ENCODE measurements at regions of chr16 and their contacts with region 1.

Region 1: DNA sequence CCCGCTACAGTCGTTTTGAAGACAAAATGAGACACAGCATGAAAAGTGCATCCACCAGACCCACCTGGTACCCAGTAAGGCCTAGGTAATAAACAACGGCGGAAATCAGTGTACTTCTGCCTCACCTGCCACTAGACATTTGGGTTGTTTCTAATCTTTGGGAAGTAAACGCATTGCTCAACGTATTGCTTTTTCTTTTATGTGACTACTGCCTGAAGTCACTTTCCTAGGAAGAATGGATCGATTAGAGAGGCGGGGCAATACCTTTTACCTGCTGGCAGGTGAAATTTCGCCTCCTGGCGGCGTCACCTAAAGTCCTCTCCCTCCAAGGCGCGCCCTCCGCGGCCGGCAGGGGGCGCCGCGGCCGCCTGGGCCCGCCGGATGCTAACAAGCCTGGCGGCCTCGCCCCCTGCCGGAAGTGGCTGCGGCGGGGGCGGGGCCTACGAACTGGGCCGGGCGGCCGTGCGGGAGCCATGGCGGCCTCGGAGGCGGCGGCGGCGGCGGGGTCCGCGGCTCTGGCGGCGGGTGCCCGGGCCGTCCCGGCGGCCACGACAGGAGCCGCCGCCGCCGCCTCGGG is at the start of gene ATMIN:
- DNase-seq: peak; percentile 80 to 93
- H3K4me3 ChIP-seq: peak within 1 kb of the TSS; percentile 66 to 90 (median 85)
- H3K27ac ChIP-seq: peak within 1 kb of the TSS; percentile 80; the same call in 1 of the 2 replicates
- H3K4me1 ChIP-seq: peaks cover 2 to 6% (median 3%) of the 10 kb centered on the region in 4 experiments; a peak in 5 of 7 replicates
- H3K27me3 ChIP-seq: no peaks in the 10 kb centered on the region
- CTCF ChIP-seq: peak; percentile 95 to 100 (median 96)
- EP300 ChIP-seq: peak in 1 of 2 experiments; percentile 73; a peak in 1 of 3 replicates
- POLR2A ChIP-seq: peak; percentile 46 to 70; a peak in 1 of 3 replicates
- RAD21 ChIP-seq: peak; percentile 59 to 74
- total RNA-seq, gene ATMIN: 55.9 and 59.8 TPM in 2 replicates

Region 2: DNA sequence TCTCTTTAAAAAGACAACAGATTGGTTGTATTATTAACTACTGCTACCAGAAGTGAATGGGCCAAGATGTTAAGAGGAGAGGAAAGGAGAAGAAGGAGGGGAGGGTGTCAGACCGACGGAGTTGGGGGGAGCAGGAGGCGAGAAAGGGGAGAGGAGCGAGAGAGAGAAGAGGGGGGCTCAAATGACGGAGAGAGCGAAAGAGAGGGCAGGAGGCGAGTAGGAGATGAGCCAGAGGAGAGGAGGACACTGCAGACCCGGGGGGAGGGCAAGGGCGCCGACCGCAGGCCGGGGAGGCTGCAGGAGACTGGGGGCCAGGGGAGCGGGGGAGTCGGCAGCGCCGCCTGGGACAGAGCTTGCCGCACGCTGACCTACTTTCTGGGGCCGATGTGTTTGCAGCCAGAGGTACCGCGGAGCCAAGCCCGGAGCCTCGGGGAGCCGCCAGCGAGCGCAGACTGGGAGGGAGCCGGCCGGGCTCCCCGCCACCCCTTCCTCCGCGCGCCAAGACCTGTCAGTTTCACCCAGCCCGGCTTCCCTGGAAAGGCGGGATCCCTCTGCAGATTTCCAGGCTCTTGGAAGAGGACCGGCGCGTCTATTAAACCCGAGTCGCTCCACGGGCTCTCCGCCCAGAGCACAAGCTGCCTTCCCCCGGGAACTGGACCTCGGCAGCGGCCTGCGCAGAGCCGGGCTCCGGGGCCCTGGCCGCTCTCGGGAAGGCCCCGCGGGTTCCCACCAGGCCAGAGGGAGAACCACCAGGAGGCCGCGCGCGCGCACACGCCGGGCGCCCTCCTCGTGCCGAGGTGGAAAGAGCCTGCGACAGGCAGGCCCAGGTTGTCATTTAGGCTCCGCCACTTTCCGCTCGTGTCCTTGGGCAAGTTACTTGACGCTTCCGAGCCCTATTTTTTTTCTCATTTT is 103.4 kb before region 1 on chr16:
- CTCF ChIA-PET with region 1: no interaction called
- POLR2A ChIA-PET with region 1: no interaction called
- DNase-seq: peak; percentile 33 to 77
- H3K4me3 ChIP-seq: peak overlapping the region; percentile 27 to 61 (median 34)
- H3K27ac ChIP-seq: no peak overlapping the region
- H3K4me1 ChIP-seq: peaks cover 0 to 4% (median 0%) of the 10 kb centered on the region in 4 experiments; a peak in 2 of 7 replicates
- H3K27me3 ChIP-seq: peaks cover 0 to 26% (median 21%) of the 10 kb centered on the region in 4 experiments; a peak in 6 of 7 replicates
- CTCF ChIP-seq: peak in 2 of 3 experiments; percentile 0 to 15; a peak in 2 of 4 replicates
- EP300 ChIP-seq: no peak
- POLR2A ChIP-seq: no peak
- RAD21 ChIP-seq: no peak; a peak in 1 of 4 replicates

Region 3: DNA sequence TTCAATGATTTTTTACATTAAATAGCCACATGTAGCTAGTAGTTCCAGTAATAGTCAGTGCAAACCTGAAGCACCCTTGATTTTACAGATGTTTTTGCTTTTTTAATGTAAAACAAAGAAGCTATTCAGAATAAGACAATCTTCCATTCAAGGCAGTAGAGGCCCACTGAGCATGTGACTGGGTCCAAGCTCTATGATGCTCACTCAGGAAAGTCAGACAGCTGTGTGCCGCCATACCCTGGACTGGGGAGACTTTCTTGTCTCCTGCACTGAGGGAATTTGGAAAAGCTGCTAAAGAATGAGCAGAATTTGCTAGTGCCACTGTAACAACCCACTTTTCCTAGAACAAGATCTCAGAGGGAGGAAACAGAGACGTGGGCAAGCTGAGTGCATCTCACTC is 17.0 kb before region 1 on chr16:
- CTCF ChIA-PET with region 1: interaction called, 11 read pairs
- POLR2A ChIA-PET with region 1: interaction called, 6 read pairs
- DNase-seq: no peak
- H3K4me3 ChIP-seq: no peak overlapping the region
- H3K27ac ChIP-seq: no peak overlapping the region
- H3K4me1 ChIP-seq: no peaks in the 10 kb centered on the region
- H3K27me3 ChIP-seq: no peaks in the 10 kb centered on the region
- CTCF ChIP-seq: no peak
- EP300 ChIP-seq: no peak
- POLR2A ChIP-seq: no peak
- RAD21 ChIP-seq: no peak

Region 4: DNA sequence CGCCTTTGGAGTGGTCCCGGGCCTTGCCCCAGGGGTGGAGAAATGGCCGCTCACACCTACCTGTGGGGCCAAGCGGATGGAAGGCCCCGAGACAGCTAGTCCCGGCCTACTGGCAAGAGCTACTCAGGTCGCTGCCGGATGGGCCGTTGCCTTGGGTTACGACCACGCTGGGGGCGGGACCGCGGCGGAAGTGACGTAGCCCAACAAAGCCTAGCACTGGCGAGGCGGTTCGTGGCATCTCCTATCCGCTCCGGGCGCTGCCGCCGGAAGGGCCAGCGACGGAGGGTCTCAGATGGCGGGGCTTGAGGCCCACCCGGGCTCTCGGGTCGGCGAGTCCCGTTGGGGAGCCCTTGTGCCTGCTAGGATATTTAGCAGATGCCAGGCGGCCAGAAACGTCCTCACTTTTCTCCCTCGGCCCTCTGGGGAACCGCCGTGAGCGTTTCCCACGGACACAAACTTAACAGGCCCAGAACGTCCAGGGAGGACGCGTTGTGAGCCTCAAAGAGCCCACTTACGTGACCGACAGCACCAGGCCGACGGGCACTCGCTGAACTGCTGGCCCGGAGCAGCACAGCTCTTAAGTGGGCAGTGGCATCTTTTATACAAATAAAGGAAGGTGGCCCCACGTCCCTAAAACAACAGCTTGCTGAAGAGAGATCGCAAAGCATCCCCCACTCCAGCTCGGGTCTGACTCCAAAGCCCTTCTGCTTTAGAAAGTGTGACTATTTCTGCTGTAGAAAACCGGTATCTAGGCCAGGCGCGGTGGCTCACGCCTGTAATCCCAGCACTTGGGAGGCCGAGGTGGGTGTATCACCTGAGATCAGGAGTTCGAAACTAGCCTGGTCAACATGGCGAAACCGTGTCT is 41.8 kb after region 1 on chr16 and contains the start of gene C16orf46:
- CTCF ChIA-PET with region 1: interaction called, 6 read pairs
- POLR2A ChIA-PET with region 1: interaction called, 35 read pairs
- DNase-seq: peak; percentile 90 to 100
- H3K4me3 ChIP-seq: peak within 1 kb of the TSS; percentile 64 to 90 (median 80)
- H3K27ac ChIP-seq: peak within 1 kb of the TSS; percentile 84
- H3K4me1 ChIP-seq: peaks cover 0 to 2% (median 0%) of the 10 kb centered on the region in 4 experiments; a peak in 3 of 7 replicates
- H3K27me3 ChIP-seq: no peaks in the 10 kb centered on the region
- CTCF ChIP-seq: no peak
- EP300 ChIP-seq: no peak
- POLR2A ChIP-seq: peak; percentile 93 to 94
- RAD21 ChIP-seq: no peak; a peak in 1 of 4 replicates
- total RNA-seq, gene C16orf46: 0.60 and 1.1 TPM in 2 replicates

Region 5: GRCh38 chr16:81116285-81116684 is 80.8 kb after region 1 on chr16:
- CTCF ChIA-PET with region 1: no interaction called
- POLR2A ChIA-PET with region 1: no interaction called
- DNase-seq: no peak
- H3K4me3 ChIP-seq: no peak overlapping the region
- H3K27ac ChIP-seq: no peak overlapping the region
- H3K4me1 ChIP-seq: no peaks in the 10 kb centered on the region
- H3K27me3 ChIP-seq: no peaks in the 10 kb centered on the region
- CTCF ChIP-seq: no peak
- EP300 ChIP-seq: no peak
- POLR2A ChIP-seq: no peak
- RAD21 ChIP-seq: no peak